ENCODE measurements at regions of chr13 and their contacts with region 1.

Region 1: DNA sequence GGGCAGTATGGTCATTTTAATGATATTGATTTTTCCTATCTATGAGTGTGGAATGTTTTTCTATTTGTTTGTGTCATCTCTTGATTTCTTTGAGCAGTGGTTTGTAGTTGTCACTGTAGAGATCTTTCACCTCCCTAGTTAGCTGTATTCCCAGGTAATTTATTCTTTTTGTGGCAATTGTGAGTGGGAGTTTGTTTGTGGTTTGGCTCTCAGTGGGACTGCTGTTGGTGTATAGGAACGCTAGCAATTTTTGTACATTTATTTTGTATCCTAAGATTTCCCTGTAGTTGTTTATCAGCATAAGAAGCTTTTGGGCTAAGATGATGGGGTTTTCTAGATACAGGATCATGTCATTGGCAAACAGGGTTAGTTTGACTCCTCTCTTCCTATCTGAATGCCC is 28.9 kb downstream of the NBEA start:
- DNase-seq: no peak
- H3K4me3 ChIP-seq: no peak overlapping the region
- H3K27me3 ChIP-seq: no peaks in the 10 kb centered on the region
- CTCF ChIP-seq: no peak

Region 2: DNA sequence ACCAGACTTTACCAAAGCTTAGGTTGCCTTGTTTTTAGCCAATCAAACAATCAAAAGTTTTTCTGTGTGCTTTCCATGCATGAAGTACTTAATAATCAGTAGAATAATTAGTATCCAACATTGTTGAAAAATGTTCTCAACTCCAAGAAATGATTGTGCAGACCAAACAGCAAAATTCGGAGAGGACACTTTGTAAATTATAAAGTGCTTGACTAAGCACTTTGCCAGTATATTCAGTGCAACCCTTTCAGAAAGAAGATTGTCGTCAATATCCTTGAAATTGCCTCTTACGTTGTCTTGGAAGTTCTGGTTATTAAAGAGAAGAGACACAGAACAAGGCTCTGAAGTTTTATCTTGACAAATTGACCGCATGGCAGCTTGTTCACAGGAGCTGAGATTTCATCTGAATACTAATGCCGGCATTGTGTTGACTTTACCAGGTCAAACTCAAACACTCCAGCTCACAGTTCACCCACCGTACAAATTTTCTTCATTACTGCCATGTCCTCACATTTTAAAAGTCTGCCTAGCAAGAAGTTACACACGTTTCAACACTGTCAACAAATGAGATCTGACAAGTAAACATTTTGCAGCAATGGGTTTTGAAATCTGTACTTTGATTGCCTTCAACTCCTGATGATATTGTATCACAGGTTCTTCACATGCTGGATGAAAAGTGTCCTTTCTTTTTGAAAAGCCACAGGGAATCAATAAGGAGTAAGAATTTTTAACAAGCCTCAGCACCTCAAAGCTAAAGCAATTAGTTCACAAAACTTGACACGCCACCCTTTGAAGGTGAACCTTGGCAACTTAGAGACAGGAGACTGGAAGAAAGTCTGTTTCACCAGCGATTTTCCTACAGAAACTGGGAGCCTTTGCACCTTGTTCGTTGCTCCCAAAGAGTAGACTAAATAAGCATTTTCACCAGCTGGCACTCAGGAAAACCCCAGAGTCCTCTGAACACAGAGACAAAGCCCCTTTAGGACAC is 1002.1 kb before region 1 on chr13:
- CTCF ChIA-PET with region 1: no interaction called
- POLR2A ChIA-PET with region 1: interaction called, 12 read pairs
- DNase-seq: no peak
- H3K4me3 ChIP-seq: no peak overlapping the region
- H3K27me3 ChIP-seq: no peaks in the 10 kb centered on the region
- CTCF ChIP-seq: no peak

Region 3: GRCh38 chr13:34959489-34959888 is 11.5 kb before region 1 on chr13:
- CTCF ChIA-PET with region 1: no interaction called
- POLR2A ChIA-PET with region 1: no interaction called
- DNase-seq: no peak
- H3K4me3 ChIP-seq: no peak overlapping the region
- H3K27me3 ChIP-seq: no peaks in the 10 kb centered on the region
- CTCF ChIP-seq: no peak